ENCODE measurements at regions of chr3 and their contacts with region 1.

Region 1: DNA sequence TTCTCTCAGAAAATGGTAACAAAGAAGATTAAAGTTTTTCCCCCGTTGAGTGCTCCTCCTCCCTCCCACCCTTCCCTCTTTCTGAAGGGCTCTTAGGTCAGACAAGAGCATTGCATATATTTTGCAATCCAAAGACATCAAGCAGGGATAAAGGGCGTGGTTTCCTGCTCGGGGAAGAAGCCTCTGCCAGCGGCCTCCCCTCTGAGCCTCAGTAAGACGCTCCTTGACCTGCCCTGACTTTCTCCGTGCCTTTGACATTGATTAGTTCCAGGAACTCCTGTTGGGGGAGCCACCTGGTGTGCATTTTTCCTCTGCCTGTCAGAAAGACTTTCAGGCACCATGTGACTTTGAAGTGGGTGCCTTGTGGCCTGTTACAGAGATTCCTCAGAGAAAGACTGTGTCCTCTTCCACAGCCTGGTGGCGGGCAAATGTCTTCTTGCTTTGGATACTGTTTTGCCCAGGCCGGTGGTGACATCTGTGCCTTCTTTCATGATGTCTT is 87.2 kb upstream of the TBL1XR1 start:
- DNase-seq: peak; percentile 9
- H3K4me3 Mint-ChIP-seq: no peak overlapping the region
- H3K27ac Mint-ChIP-seq: no peak overlapping the region
- H3K4me1 Mint-ChIP-seq: peaks cover 23% of the 10 kb centered on the region
- H3K27me3 Mint-ChIP-seq: no peaks in the 10 kb centered on the region

Region 2: GRCh38 chr3:175826759-175827158 is 1457.7 kb before region 1 on chr3:
- intact Hi-C with region 1: no loop called
- DNase-seq: no peak
- H3K4me3 Mint-ChIP-seq: no peak overlapping the region
- H3K27ac Mint-ChIP-seq: no peak overlapping the region
- H3K4me1 Mint-ChIP-seq: no peaks in the 10 kb centered on the region
- H3K27me3 Mint-ChIP-seq: no peaks in the 10 kb centered on the region

Region 3: DNA sequence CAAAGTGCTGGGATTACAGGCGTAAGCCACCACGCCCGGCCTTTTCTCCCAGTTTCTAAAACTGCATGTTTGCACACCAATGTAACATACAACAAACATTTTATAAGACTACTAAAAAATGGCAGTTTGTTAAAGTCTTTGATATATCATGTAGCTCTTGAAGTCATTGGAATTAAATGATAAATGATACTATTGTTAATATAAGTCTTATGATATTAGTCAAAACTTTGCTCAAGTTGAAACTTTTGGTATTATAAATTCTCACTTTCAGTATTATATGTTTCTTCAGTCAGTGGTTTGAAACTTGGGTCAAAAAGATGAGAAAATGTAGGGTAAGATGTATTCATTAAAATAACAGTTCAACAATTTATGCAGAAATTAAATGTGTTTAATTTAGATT is 30.5 kb after region 1 on chr3:
- intact Hi-C with region 1: loop called (anchors 5 kb)
- DNase-seq: no peak
- H3K4me3 Mint-ChIP-seq: no peak overlapping the region
- H3K27ac Mint-ChIP-seq: peak overlapping the region; percentile 49
- H3K4me1 Mint-ChIP-seq: peaks cover 12% of the 10 kb centered on the region
- H3K27me3 Mint-ChIP-seq: peaks cover 2% of the 10 kb centered on the region

Measured in activated T-helper 2 cell treated with anti-CD3 and anti-CD28 coated beads, Interferon-gamma antibody, Interleukin-2, Interleukin-4, amounts not matched to agents 10 μg/mL and 5 μg/mL and 100 μg/mL, durations not matched to agents 14 hours and 24 hours and 36 hours (primary cell).